K562 (cell line): ENCODE measurements at regions of chr3 and their contacts with region 1.

Region 1: DNA sequence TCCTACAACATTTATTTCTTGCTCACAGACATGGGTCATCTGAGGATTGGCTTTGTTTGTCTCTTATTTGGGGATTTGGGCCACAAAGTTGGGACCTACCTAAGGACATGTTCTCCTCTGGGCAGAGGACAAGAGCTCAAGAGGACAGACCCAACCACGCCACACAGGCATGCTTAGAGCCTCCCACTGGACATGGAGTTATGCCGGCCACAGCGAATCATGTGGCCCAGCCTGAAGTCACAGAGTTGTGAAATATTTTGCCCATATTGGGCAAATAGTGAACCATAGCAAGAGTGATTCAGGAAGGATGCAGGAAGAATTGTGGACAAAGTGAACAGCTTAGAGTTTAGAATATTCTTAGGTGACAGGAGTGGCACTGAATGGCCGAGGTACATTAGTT is 9.9 kb downstream of the TRAK1 start:
- DNase-seq: no peak
- ATAC-seq: no peak
- H3K4me3 ChIP-seq: no peak overlapping the region
- H3K27ac ChIP-seq: no peak overlapping the region
- H3K4me1 ChIP-seq: peaks cover 0 to 4% of the 10 kb centered on the region in 2 experiments; a peak in 1 of 5 replicates
- H3K27me3 ChIP-seq: no peaks in the 10 kb centered on the region
- CTCF ChIP-seq: no peak
- EP300 ChIP-seq: no peak
- POLR2A ChIP-seq: no peak
- RAD21 ChIP-seq: no peak

Region 2: GRCh38 chr3:41900265-41900664 is 200.8 kb before region 1 on chr3:
- CTCF ChIA-PET with region 1: interaction called, 52 read pairs
- POLR2A ChIA-PET with region 1: no interaction called
- in situ Hi-C with region 1: loop called (anchors 25 kb)
- intact Hi-C with region 1: loop called (anchors 1 kb)
- DNase-seq: peak in 1 of 4 experiments; percentile 29
- ATAC-seq: no peak
- H3K4me3 ChIP-seq: no peak overlapping the region
- H3K27ac ChIP-seq: no peak overlapping the region
- H3K4me1 ChIP-seq: peaks cover 5 to 6% of the 10 kb centered on the region in 2 experiments; a peak in 3 of 5 replicates
- H3K27me3 ChIP-seq: no peaks in the 10 kb centered on the region
- CTCF ChIP-seq: no peak
- EP300 ChIP-seq: no peak; the same call in 1 of the 2 replicates
- POLR2A ChIP-seq: no peak
- RAD21 ChIP-seq: no peak

Region 3: DNA sequence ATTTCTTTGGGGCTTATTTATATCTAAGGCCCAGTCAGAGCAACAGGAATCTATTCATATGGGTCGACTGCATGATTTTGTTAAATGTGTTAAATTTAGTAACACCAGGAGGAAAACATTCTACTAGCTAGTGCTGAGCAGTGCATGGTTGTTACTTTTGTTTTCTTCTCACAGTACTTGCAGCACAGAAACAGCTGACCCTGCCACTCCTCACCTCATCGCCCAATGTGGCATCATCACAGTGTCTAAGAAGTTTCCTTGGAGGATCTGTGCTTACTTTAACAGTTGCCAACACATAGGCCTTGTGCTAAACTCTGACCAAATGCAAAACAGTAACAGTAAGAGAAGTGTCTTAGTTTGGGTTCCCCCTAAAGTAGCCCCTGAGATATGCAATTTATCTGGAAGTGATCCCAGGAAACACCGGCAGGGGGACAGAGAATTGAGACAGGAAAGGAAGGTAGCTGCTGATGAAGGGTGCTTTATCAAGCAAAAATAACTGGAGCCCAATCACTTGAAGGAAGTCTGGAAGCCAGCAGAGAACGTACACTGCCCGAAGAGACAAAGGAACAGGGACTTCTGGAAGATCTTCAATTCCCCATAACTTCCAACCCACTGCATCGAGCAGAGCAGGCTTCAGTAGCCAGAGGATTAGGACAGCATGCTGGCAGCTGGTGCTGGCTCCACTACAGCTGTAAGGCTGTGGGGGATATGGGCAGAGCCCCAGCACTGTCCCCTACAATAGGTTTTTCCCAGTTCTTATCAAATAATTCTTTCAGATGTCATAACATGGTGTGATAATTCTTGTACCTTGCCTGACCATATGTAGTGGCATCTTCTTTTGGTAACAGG is 103.1 kb before region 1 on chr3:
- CTCF ChIA-PET with region 1: no interaction called
- POLR2A ChIA-PET with region 1: no interaction called
- in situ Hi-C with region 1: no loop called
- intact Hi-C with region 1: loop called (anchors 5 kb)
- DNase-seq: peak in 3 of 4 experiments; percentile 24 to 41 (median 38)
- ATAC-seq: peak; percentile 81
- H3K4me3 ChIP-seq: no peak overlapping the region
- H3K27ac ChIP-seq: no peak overlapping the region
- H3K4me1 ChIP-seq: peaks cover 7 to 8% of the 10 kb centered on the region in 2 experiments; a peak in 4 of 5 replicates
- H3K27me3 ChIP-seq: peaks cover 0 to 3% of the 10 kb centered on the region in 2 experiments; a peak in 1 of 5 replicates
- CTCF ChIP-seq: peak; percentile 53 to 66 (median 60)
- EP300 ChIP-seq: no peak
- POLR2A ChIP-seq: no peak
- RAD21 ChIP-seq: peak; percentile 5 to 56; a peak in 2 of 4 replicates

Region 4: DNA sequence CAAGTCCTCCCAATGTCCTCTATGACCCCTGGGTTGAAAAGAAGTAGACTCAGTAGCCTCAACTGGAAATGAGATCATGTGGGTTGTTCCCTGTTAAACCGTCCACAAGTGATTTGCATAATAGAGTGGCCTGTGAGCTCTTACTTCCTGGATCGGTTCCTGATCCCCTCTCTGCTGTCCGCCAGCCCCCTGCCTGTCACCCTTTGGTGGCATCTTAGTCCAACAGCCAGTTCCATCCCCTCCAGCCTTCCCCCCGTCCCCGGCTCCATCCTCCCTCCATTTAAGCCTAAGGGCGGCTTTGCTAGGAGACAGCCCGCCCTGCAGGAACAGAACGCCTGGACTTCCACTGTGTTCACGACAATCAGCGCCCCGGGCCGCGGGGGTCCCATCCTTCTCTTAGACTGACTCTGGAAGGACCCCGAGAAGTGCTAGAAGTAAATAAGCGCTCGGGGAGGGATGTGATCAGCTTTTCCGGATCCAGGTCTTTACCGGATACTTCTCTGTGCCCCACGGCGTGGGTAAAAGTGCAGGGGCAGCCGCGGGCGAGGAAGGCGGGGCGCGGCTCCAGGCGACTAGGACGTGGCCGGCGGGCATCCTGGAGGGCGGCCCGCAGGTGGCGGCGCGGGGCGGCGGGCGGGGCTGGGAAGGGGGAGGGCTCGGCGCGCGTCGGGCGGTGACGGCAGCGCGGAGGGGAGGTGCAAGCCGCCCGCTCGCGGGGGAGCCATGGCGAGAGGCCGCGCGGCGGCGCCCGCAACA is 87.9 kb before region 1 on chr3:
- CTCF ChIA-PET with region 1: interaction called, 6 read pairs
- POLR2A ChIA-PET with region 1: interaction called, 3 read pairs
- in situ Hi-C with region 1: no loop called
- intact Hi-C with region 1: loop called (anchors 2 kb)
- DNase-seq: peak; percentile 87 to 96 (median 94)
- ATAC-seq: peak; percentile 90
- H3K4me3 ChIP-seq: peak overlapping the region; percentile 85
- H3K27ac ChIP-seq: peak overlapping the region; percentile 87
- H3K4me1 ChIP-seq: peaks cover 16 to 21% of the 10 kb centered on the region in 2 experiments
- H3K27me3 ChIP-seq: no peaks in the 10 kb centered on the region; a peak in 1 of 5 replicates
- CTCF ChIP-seq: peak in 2 of 3 experiments; percentile 18 to 24; a peak in 2 of 6 replicates
- EP300 ChIP-seq: peak; percentile 52; the same call in 1 of the 2 replicates
- POLR2A ChIP-seq: peak; percentile 68
- RAD21 ChIP-seq: 0 out of 4 replicates have a peak, but pooled peaks of 1 of the 2 experiments have one; percentile 6

Region 5: GRCh38 chr3:42198709-42199108 is 97.7 kb after region 1 on chr3:
- CTCF ChIA-PET with region 1: no interaction called
- POLR2A ChIA-PET with region 1: no interaction called
- in situ Hi-C with region 1: no loop called
- intact Hi-C with region 1: no loop called
- DNase-seq: no peak
- ATAC-seq: no peak
- H3K4me3 ChIP-seq: no peak overlapping the region
- H3K27ac ChIP-seq: no peak overlapping the region
- H3K4me1 ChIP-seq: peaks cover 0 to 6% of the 10 kb centered on the region in 2 experiments; a peak in 1 of 5 replicates
- H3K27me3 ChIP-seq: no peaks in the 10 kb centered on the region
- CTCF ChIP-seq: no peak
- EP300 ChIP-seq: no peak
- POLR2A ChIP-seq: no peak
- RAD21 ChIP-seq: no peak